ENCODE measurements at regions of chr16 and their contacts with region 1.

Region 1: DNA sequence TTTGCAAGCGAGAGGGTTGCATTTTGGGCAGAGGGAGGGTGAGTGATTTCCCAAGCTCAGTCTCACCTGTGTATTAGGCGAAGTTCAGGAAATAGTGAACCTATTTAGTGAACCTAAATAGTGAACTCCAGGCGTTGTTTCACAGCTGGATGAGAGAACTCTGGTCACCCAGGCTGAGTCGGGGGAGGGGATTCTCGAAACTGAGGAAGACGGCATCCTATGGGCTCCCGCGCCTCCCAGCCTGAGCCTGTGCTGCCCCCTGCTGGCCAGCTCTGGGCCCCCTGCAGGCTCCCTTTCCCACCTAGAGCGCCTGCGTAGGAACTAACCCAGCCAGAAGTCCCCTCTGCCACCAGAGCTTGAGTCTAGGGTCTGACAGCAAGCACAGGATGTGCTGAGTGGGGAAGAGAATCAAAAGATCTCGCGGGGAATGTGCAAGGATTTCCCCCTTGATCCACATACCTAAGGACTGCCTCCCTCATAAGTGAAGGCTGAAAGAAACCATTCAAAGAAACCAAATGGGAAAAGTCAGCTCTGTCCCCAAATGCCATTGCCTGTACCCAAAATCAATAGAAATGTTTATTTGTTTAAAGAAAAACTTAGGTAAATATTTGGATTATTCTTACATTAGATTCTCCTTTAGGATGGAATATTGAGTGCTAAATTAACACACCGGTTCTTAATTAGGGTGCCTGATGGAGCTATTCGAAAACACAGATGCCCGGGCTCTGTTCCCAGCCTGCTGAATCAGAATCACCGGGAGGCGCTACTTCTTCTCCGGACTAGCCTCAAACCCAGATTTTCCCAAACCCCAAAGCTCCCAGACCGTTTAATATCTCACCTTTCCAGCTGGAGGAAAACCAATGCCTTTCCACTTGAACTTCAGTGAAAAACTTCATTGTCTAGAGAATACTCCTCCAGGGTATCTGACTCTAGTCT is 14.8 kb upstream of the MARVELD3 start:
- DNase-seq: peak; percentile 69
- ATAC-seq: peak; percentile 87
- H3K4me3 ChIP-seq: no peak overlapping the region
- H3K27ac ChIP-seq: no peak overlapping the region
- H3K4me1 ChIP-seq: peaks cover 5% of the 10 kb centered on the region; the same call in 1 of the 2 replicates
- H3K27me3 ChIP-seq: no peaks in the 10 kb centered on the region
- CTCF ChIP-seq: peak; percentile 69

Region 2: GRCh38 chr16:71412270-71413160 is 198.7 kb before region 1 on chr16:
- CTCF ChIA-PET with region 1: no interaction called
- POLR2A ChIA-PET with region 1: no interaction called
- intact Hi-C with region 1: loop called (anchors 2 kb)
- DNase-seq: peak; percentile 79
- ATAC-seq: peak; percentile 90
- H3K4me3 ChIP-seq: no peak overlapping the region
- H3K27ac ChIP-seq: no peak overlapping the region
- H3K4me1 ChIP-seq: no peaks in the 10 kb centered on the region
- H3K27me3 ChIP-seq: peaks cover 20% of the 10 kb centered on the region
- CTCF ChIP-seq: peak; percentile 74

Region 3: DNA sequence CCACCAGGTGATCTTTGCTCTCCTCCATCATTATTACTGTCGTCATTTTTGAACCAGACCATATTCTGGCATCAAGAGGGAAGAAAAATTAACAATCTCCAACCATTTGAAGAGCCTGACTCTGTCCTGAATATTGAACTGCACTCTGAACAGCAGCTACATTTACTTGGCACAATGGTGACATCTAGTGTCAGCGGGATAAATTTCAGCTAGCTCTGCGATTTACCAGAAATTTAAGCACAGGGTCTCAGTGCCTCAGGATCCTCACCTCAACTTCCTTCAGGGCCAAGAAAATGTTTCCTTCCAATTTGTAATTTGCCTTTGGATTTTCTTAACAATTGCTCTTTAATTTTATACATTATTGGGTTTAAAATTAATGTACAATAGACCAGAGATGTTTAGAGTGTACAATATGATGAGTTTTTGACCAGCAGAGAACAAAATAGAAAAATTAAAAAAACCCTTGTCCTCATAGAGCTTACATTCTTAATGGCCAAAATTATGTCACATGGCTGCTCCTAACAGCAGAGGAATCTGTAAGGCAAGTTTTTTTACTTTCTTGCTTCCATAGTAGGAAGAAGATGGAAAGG is 111.3 kb before region 1 on chr16:
- CTCF ChIA-PET with region 1: no interaction called
- POLR2A ChIA-PET with region 1: no interaction called
- intact Hi-C with region 1: loop called (anchors 2 kb)
- DNase-seq: peak; percentile 71
- ATAC-seq: peak; percentile 72
- H3K4me3 ChIP-seq: no peak overlapping the region
- H3K27ac ChIP-seq: no peak overlapping the region
- H3K4me1 ChIP-seq: no peaks in the 10 kb centered on the region
- H3K27me3 ChIP-seq: no peaks in the 10 kb centered on the region
- CTCF ChIP-seq: peak; percentile 70

Region 4: GRCh38 chr16:71528257-71528656 is 82.9 kb before region 1 on chr16:
- CTCF ChIA-PET with region 1: no interaction called
- POLR2A ChIA-PET with region 1: interaction called, 20 read pairs
- intact Hi-C with region 1: no loop called
- DNase-seq: no peak
- ATAC-seq: no peak
- H3K4me3 ChIP-seq: no peak overlapping the region
- H3K27ac ChIP-seq: no peak overlapping the region
- H3K4me1 ChIP-seq: no peaks in the 10 kb centered on the region
- H3K27me3 ChIP-seq: peaks cover 32% of the 10 kb centered on the region; the same call in 1 of the 2 replicates
- CTCF ChIP-seq: no peak

Region 5: GRCh38 chr16:71537643-71538042 is 73.6 kb before region 1 on chr16:
- CTCF ChIA-PET with region 1: no interaction called
- POLR2A ChIA-PET with region 1: no interaction called
- intact Hi-C with region 1: loop called (anchors 1 kb)
- DNase-seq: peak; percentile 63
- ATAC-seq: peak; percentile 80
- H3K4me3 ChIP-seq: no peak overlapping the region
- H3K27ac ChIP-seq: no peak overlapping the region
- H3K4me1 ChIP-seq: no peaks in the 10 kb centered on the region
- H3K27me3 ChIP-seq: no peaks in the 10 kb centered on the region
- CTCF ChIP-seq: peak; percentile 61

Region 6: DNA sequence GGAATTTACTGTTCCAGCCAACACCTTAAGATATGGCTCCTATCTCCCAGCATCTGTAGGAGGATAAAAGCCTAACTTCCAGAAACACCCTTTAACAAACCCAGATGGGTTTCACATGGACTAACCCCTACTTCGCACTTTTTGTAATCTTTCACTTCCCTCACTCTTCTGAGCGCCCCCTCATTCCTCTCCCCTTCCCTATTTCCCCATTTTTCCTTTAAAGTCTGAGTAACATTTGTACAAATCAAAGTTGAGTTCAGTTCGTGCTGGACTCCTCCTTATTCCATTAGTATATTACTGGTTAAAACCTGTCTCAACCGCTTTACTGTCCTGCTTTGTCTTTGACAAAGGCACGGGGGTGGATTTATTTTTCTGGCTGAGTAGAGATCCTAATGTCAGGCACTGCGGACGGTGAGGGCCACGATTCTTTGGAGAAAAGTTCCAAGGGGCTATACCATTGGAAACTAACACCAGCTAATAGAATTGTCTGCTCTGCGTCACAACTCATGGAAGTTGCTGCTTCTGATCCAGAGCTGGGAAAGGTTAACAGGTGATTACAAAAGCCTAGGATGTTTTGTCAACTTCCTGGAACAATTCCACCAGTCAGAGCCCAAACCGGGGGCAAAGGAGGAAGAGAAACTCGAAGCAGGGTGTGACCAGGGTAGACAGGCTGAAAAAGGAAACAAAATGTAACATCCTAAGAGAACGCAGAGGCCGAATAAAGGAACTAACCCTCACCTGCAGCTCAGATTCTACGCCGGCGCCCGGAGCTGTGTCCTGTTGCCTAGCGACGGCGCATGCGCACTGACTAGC is 46.8 kb before region 1 on chr16:
- CTCF ChIA-PET with region 1: interaction called, 40 read pairs
- POLR2A ChIA-PET with region 1: interaction called, 9 read pairs
- intact Hi-C with region 1: loop called (anchors 1 kb)
- DNase-seq: peak; percentile 2
- ATAC-seq: peak; percentile 5; the same call in 1 of the 2 replicates
- H3K4me3 ChIP-seq: peak overlapping the region; percentile 69
- H3K27ac ChIP-seq: no peak overlapping the region
- H3K4me1 ChIP-seq: peaks cover 11% of the 10 kb centered on the region
- H3K27me3 ChIP-seq: no peaks in the 10 kb centered on the region
- CTCF ChIP-seq: no peak

Region 7: GRCh38 chr16:71594000-71594646 is 17.1 kb before region 1 on chr16:
- CTCF ChIA-PET with region 1: no interaction called
- POLR2A ChIA-PET with region 1: no interaction called
- intact Hi-C with region 1: no loop called
- DNase-seq: no peak
- ATAC-seq: no peak
- H3K4me3 ChIP-seq: no peak overlapping the region
- H3K27ac ChIP-seq: no peak overlapping the region
- H3K4me1 ChIP-seq: no peaks in the 10 kb centered on the region
- H3K27me3 ChIP-seq: no peaks in the 10 kb centered on the region
- CTCF ChIP-seq: no peak

Region 8: GRCh38 chr16:71726476-71727315 is 115.5 kb after region 1 on chr16:
- CTCF ChIA-PET with region 1: no interaction called
- POLR2A ChIA-PET with region 1: no interaction called
- intact Hi-C with region 1: no loop called
- DNase-seq: no peak
- ATAC-seq: no peak
- H3K4me3 ChIP-seq: no peak overlapping the region
- H3K27ac ChIP-seq: no peak overlapping the region
- H3K4me1 ChIP-seq: 0 out of 2 replicates have a peak, but pooled peaks cover 5% of the 10 kb centered on the region
- H3K27me3 ChIP-seq: no peaks in the 10 kb centered on the region
- CTCF ChIP-seq: no peak

Region 9: GRCh38 chr16:73217654-73218053 is 1606.5 kb after region 1 on chr16:
- CTCF ChIA-PET with region 1: no interaction called
- POLR2A ChIA-PET with region 1: no interaction called
- intact Hi-C with region 1: no loop called
- DNase-seq: no peak
- ATAC-seq: no peak
- H3K4me3 ChIP-seq: no peak overlapping the region
- H3K27ac ChIP-seq: no peak overlapping the region
- H3K4me1 ChIP-seq: no peaks in the 10 kb centered on the region; the same call in 1 of the 2 replicates
- H3K27me3 ChIP-seq: no peaks in the 10 kb centered on the region
- CTCF ChIP-seq: peak; percentile 54

Measured in PC-3 (cell line).